ENCODE measurements at regions of chr21 and their contacts with region 1.

Region 1: DNA sequence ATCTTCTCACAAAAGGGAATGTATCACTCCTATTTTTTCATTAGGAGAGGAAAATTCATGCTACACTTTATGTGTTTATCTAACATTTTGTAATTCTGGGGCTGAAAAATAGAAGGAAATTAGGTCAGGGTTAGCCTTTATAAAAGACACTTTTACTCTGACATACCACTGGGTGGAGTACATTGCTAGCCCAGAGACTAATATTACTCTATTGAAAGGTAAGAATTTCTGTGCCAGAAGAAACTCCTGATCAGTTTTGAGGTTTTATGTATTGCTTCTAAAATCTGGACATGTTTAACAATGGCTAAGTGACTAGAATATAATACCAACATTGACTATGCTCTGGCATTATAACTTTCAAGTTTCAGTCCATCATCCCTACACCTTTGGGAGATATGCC is 724.6 kb downstream of the USP25 start:
- DNase-seq: no peak
- ATAC-seq: peak; percentile 53 to 70 (median 68)
- H3K4me3 ChIP-seq: no peak overlapping the region
- H3K27ac ChIP-seq: peak overlapping the region in 2 of 10 donors; percentile 3
- H3K4me1 ChIP-seq: peaks cover 3 to 83% (median 34%) of the 10 kb centered on the region in 9 donors
- H3K27me3 ChIP-seq: no peaks in the 10 kb centered on the region
- CTCF ChIP-seq: peak in 6 of 9 donors; percentile 38 to 63 (median 48)

Region 2: DNA sequence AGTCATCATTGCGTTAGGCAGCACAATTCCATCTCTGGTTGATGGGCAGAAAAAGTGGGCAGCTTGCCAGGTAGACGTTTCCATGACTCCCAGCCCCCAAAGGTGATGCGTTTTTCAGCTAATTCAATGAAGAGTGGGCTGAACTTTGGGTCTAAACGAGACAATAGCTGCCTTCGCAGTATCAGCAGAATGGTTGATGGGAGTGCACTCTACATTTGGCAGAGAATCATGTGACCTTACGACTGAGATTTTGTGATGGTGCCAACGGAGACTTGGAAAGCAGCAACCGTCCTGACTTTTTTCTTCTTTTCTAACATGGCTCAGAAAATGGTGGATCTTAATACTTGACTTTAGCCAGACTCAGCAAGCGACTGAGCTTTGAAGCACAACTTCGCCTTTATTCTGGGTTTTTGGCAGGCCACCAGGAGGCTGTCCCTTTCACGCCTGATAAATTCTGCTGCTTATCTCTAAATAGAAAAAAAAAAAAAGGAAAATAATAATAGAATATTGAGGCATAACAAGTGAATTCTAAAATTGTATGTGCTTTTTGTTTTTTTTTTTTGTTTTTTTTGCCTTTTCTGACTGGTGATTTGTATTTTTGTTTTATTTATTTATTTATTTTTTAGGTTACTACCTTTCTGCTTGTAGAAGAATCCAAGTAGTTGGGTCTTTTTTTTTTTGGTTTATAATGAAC is 80.2 kb after region 1 on chr21:
- intact Hi-C with region 1: loop called in 2 of 10 experiments (anchors 5 to 10 kb)
- DNase-seq: peak; percentile 63 to 80
- ATAC-seq: peak; percentile 66 to 83 (median 77)
- H3K4me3 ChIP-seq: peak overlapping the region in 9 of 10 donors; percentile 12 to 63 (median 49)
- H3K27ac ChIP-seq: peak overlapping the region; percentile 66 to 92 (median 86)
- H3K4me1 ChIP-seq: peaks cover 0 to 38% (median 17%) of the 10 kb centered on the region in 9 donors
- H3K27me3 ChIP-seq: no peaks in the 10 kb centered on the region
- CTCF ChIP-seq: no peak

Region 3: GRCh38 chr21:16588433-16588860 is 134.0 kb after region 1 on chr21:
- intact Hi-C with region 1: loop called in 1 of 10 experiments (anchors 10 kb)
- DNase-seq: peak; percentile 45 to 51
- ATAC-seq: peak; percentile 79 to 94 (median 91)
- H3K4me3 ChIP-seq: peak overlapping the region; percentile 16 to 54 (median 44)
- H3K27ac ChIP-seq: peak overlapping the region in 9 of 10 donors; percentile 51 to 75 (median 68)
- H3K4me1 ChIP-seq: peaks cover 2 to 43% (median 20%) of the 10 kb centered on the region in 9 donors
- H3K27me3 ChIP-seq: no peaks in the 10 kb centered on the region
- CTCF ChIP-seq: no peak

Region 4: GRCh38 chr21:16608209-16608830 is 153.9 kb after region 1 on chr21:
- intact Hi-C with region 1: loop called in 1 of 10 experiments (anchors 10 kb)
- DNase-seq: no peak
- ATAC-seq: peak in 3 of 8 donors; percentile 30 to 57 (median 37)
- H3K4me3 ChIP-seq: no peak overlapping the region
- H3K27ac ChIP-seq: no peak overlapping the region
- H3K4me1 ChIP-seq: peaks cover 0 to 17% (median 3%) of the 10 kb centered on the region in 9 donors
- H3K27me3 ChIP-seq: no peaks in the 10 kb centered on the region
- CTCF ChIP-seq: peak in 5 of 9 donors; percentile 22 to 49 (median 40)

Region 5: DNA sequence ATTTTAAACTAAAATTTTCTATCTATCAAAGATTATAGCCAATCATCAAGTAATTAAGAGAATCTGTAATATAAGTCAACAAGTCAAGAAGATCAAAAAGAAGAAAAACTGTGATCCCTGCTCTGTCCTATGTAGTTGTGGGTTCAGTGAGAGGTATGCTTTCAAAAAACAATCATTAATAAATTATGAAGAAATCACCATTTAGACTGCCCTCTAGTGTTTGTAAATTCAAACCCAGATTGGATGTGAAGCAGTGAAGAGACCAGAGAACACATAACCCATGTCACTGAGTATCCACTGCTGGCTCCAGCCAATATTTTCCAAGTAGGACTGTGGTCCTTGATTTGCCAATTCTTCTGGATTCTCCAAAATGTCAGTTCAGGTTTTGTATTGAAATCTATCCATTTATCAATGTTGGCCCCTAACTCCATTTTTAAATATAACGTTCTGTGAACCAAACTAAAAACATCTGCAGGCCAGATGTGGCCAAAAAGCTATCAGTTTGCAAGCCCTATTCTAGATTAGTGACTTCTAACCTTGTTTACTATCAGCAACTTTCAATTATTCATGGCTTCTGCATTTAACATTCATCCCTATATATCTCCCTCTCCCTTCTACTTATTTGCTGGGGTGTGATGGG is 590.9 kb after region 1 on chr21:
- intact Hi-C with region 1: loop called in 1 of 10 experiments (anchors 10 kb)
- DNase-seq: no peak
- ATAC-seq: peak in 2 of 8 donors; percentile 41 to 52
- H3K4me3 ChIP-seq: no peak overlapping the region
- H3K27ac ChIP-seq: no peak overlapping the region
- H3K4me1 ChIP-seq: no peaks in the 10 kb centered on the region
- H3K27me3 ChIP-seq: no peaks in the 10 kb centered on the region
- CTCF ChIP-seq: peak in 7 of 9 donors; percentile 38 to 69 (median 51)

Region 6: DNA sequence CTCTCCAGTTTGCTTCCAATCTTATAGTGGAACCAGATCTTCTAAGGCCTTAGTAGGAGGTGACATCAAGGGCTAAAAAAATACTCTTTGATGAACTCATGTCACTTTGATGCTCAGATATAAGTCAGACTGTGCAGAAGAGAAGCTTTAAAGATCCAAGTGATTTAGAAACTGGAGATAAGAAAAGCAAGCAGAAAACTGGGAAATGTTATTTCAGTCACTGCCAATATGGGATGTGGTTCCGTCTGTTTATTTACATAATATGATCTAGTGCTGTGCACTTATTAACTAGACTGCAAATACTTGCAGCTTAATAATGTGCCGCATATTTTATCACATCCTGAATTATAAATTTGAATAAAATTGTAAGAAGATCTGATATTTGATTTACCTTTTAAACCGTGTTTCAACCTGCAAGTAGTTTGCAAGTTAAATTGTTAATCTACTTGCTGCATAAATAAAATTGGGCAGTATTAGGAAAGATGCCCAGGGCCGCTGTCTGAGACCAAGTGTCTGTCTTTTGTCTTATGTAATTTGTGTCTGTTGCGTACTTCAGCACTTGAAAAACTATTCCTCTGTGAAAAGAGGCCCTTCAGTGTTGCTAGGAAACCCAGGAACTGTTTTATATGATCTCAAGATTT is 1088.1 kb after region 1 on chr21:
- intact Hi-C with region 1: no loop called
- DNase-seq: no peak
- ATAC-seq: peak in 5 of 8 donors; percentile 40 to 71 (median 56)
- H3K4me3 ChIP-seq: no peak overlapping the region
- H3K27ac ChIP-seq: peak overlapping the region in 3 of 10 donors; percentile 5 to 53 (median 32)
- H3K4me1 ChIP-seq: peaks cover 0 to 37% (median 15%) of the 10 kb centered on the region in 9 donors
- H3K27me3 ChIP-seq: no peaks in the 10 kb centered on the region
- CTCF ChIP-seq: no peak

Measured in heart right ventricle (tissue), 16 donors.